ENCODE measurements at regions of chr5 and their contacts with region 1.

Region 1: GRCh38 chr5:69093771-69094482 is at the start of gene SLC30A5:
- DNase-seq: peak; percentile 99
- H3K4me3 Mint-ChIP-seq: peak within 1 kb of the TSS; percentile 88
- H3K27ac Mint-ChIP-seq: peak within 1 kb of the TSS; percentile 87
- H3K4me1 Mint-ChIP-seq: peaks cover 28% of the 10 kb centered on the region
- H3K27me3 Mint-ChIP-seq: no peaks in the 10 kb centered on the region
- total RNA-seq, gene SLC30A5: 30.0 to 36.2 TPM

Region 2: GRCh38 chr5:68822796-68823195 is 271.1 kb before region 1 on chr5:
- CTCF ChIA-PET with region 1: no interaction called
- intact Hi-C with region 1: no loop called
- DNase-seq: no peak
- H3K4me3 Mint-ChIP-seq: no peak overlapping the region
- H3K27ac Mint-ChIP-seq: no peak overlapping the region
- H3K4me1 Mint-ChIP-seq: no peaks in the 10 kb centered on the region
- H3K27me3 Mint-ChIP-seq: no peaks in the 10 kb centered on the region

Region 3: DNA sequence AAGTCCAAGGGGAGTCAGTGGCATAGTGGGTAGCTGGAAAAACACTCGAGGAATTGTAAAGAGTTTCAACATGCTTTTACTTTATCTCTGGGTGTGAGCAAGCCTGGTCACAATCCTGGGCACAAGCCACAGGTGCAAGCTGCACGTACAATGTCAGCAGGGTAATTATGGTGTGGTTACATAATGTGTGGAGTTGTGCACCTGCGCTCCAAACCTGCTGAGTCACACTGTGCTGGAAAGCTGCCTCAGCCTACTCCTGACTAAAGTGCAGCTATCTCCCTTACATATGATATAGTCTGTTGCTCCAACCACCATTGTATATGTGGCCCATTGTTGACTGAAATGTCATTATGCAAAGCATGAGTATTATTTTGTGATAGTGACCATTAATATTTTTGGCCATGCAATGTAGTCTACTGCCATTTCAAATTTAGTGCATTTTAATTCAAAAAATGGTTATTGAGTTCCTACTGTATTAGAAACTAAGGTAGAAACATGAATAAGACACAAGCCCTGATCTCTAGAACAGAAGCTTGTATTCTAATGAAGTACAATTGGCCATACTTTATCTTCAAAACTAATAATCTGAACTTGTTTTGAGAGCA is 161.0 kb before region 1 on chr5:
- CTCF ChIA-PET with region 1: no interaction called
- intact Hi-C with region 1: no loop called
- DNase-seq: peak; percentile 39
- H3K4me3 Mint-ChIP-seq: no peak overlapping the region
- H3K27ac Mint-ChIP-seq: no peak overlapping the region
- H3K4me1 Mint-ChIP-seq: no peaks in the 10 kb centered on the region
- H3K27me3 Mint-ChIP-seq: no peaks in the 10 kb centered on the region

Region 4: GRCh38 chr5:69042915-69043658 is 50.8 kb before region 1 on chr5:
- CTCF ChIA-PET with region 1: interaction called, 15 read pairs
- intact Hi-C with region 1: loop called (anchors 1 kb)
- DNase-seq: peak; percentile 90
- H3K4me3 Mint-ChIP-seq: peak overlapping the region; percentile 73
- H3K27ac Mint-ChIP-seq: peak overlapping the region; percentile 84
- H3K4me1 Mint-ChIP-seq: peaks cover 9% of the 10 kb centered on the region
- H3K27me3 Mint-ChIP-seq: no peaks in the 10 kb centered on the region

Region 5: GRCh38 chr5:69166686-69167492 is 73.0 kb after region 1 on chr5 and contains the start of gene CCNB1:
- CTCF ChIA-PET with region 1: interaction called, 6 read pairs
- intact Hi-C with region 1: loop called (anchors 1 kb)
- DNase-seq: peak; percentile 99
- H3K4me3 Mint-ChIP-seq: peak within 1 kb of the TSS; percentile 95
- H3K27ac Mint-ChIP-seq: peak within 1 kb of the TSS; percentile 87
- H3K4me1 Mint-ChIP-seq: peaks cover 20% of the 10 kb centered on the region
- H3K27me3 Mint-ChIP-seq: no peaks in the 10 kb centered on the region
- total RNA-seq, gene CCNB1: 209 to 211 TPM

Region 6: DNA sequence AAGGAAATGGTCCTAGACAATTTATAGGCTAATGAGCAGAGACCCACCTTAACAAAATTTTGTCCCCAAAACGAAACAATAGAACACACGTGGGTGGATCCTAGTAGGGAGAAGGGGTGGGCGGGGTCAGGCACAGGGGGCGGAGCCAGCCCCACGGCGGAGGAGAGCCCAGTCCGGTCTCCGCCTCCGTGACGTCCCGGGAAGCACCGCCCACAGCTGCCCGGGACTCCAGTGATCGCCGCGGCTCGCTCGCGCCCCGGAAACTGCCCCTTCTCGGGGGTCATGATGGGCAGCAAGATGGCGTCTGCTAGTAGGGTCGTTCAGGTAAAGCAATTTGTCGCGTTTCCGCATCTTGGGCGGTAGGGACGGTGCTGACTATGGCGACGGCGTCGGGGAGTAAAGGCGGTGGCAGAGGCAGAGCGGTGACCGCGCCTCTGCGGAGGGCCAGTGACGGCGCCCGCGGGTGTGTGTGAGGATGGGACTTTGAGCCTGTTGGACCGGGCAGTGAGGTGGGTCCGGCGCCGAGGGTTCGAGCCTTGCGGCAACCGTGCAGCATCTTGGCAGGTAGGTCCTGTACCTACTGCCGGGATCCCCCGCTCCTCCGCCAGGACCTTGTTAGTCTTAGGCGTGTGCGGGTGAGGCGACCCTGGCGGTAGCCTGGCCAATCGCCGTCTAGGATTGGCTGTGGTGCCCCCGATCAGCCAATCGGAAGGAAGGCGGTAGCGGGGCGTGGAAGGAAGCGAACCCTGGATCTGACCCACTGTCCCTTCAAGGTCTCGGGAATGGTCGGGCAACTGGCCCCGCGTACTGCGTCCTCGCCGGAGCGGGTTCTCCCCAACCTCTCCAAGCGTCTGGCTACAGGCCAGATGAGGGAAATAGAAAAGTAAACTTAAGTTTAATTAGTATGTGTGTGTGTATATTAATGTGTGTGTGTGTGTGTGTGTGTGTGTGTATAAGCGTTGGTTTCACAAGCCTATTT is 123.9 kb after region 1 on chr5:
- CTCF ChIA-PET with region 1: no interaction called
- intact Hi-C with region 1: loop called (anchors 2 kb)
- DNase-seq: peak; percentile 93
- H3K4me3 Mint-ChIP-seq: peak overlapping the region; percentile 99
- H3K27ac Mint-ChIP-seq: peak overlapping the region; percentile 93
- H3K4me1 Mint-ChIP-seq: peaks cover 14% of the 10 kb centered on the region
- H3K27me3 Mint-ChIP-seq: no peaks in the 10 kb centered on the region

Region 7: GRCh38 chr5:69334793-69335268 is 240.9 kb after region 1 on chr5:
- CTCF ChIA-PET with region 1: interaction called, 29 read pairs
- intact Hi-C with region 1: loop called (anchors 1 kb)
- DNase-seq: peak; percentile 88
- H3K4me3 Mint-ChIP-seq: peak overlapping the region; percentile 24
- H3K27ac Mint-ChIP-seq: no peak overlapping the region
- H3K4me1 Mint-ChIP-seq: peaks cover 13% of the 10 kb centered on the region
- H3K27me3 Mint-ChIP-seq: no peaks in the 10 kb centered on the region

Region 8: GRCh38 chr5:69492391-69492922 is 398.5 kb after region 1 on chr5 and contains the start of gene OCLN:
- CTCF ChIA-PET with region 1: no interaction called
- intact Hi-C with region 1: loop called (anchors 5 kb)
- DNase-seq: peak; percentile 23
- H3K4me3 Mint-ChIP-seq: peak within 1 kb of the TSS; percentile 74
- H3K27ac Mint-ChIP-seq: no peak within 1 kb of the TSS
- H3K4me1 Mint-ChIP-seq: peaks cover 3% of the 10 kb centered on the region
- H3K27me3 Mint-ChIP-seq: peaks cover 55% of the 10 kb centered on the region
- total RNA-seq, gene OCLN: 0.26 to 0.62 TPM

Measured in activated naive CD4-positive, alpha-beta T cell treated with anti-CD3 and anti-CD28 coated beads for 36 hours (primary cell).